Activated CD4-positive, alpha-beta T cell treated with anti-CD3 and anti-CD28 coated beads, Interleukin-2, amount 10 ng/mL, durations not matched to agents 24 days and 14 days (primary cell): ENCODE measurements at regions of chr3 and their contacts with region 1.

Region 1: DNA sequence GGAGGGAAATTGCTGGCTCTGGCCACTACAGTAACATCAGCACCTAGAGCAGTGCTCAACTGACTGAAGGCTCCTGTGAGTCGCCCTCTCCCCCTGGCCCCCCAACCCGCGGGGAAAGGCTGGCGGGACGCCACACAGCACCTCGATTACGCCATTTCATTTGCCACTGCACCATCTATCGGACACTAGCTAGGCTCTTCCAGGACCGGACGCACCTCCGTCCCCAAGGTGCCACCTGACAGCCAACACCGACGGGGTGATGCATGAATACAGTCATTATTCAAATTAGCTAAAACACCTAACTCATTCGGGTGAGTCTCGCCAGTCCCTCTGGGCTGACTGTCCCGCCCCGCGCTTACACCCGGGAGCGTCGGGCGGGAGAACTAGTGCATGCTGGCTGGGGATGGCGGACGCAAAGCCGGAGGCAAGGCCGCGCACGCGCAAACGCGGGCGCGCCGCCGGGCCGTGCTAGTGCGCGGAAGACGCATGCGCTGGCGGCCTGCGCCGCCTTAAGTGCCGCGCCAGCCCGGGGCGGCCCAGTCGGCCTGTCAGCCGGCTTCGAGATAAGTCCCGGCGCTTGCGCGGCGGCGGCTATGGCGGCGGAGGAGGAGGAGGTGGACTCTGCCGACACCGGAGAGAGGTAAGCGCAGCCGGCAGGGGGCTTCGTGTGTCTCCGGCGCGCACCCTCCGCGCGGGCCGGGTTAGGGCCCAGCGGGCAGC is at the start of gene ABHD5:
- DNase-seq: peak; percentile 98
- H3K4me3 Mint-ChIP-seq: peak within 1 kb of the TSS; percentile 88
- H3K27ac Mint-ChIP-seq: peak within 1 kb of the TSS; percentile 91
- H3K4me1 Mint-ChIP-seq: peaks cover 28% of the 10 kb centered on the region
- H3K27me3 Mint-ChIP-seq: peaks cover 8% of the 10 kb centered on the region
- total RNA-seq, gene ABHD5: 19.0 and 19.5 TPM in 2 replicates

Region 2: DNA sequence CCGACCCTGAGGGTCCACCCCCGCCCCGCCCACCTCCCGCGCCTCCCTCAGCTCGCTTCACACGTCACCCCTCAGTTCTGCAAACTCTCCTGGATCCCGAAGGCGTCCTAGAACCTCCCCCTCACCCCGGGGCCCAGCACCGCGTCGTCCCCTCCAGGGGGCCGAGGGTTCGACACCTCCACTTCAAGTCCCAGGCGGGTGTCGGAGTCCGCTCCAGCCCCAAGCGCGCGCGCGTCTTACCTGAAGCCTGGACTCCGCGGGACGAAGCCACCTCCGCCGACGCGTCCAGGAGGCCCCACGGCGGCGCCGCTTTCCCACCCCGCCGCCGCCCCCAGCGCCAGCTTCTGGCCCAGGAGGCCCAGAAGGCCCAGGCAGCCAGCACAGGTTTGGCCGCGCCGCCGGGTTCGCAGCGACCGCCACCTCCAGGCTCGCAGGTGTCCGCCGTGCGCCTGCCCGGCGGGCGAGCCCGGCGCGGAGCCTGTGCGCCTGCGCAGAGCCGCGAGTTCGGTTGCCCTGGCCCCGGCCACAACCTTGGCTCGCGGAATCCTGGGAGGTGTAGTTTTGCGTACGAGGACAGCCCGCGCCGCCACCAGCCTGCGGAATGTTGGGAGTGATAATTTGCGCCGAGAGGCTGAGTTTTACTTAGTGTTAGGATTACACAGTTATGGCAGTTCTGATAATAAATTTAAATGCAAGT is 584.8 kb before region 1 on chr3 and contains the start of gene POMGNT2:
- intact Hi-C with region 1: loop called (anchors 5 kb)
- DNase-seq: peak; percentile 96
- H3K4me3 Mint-ChIP-seq: peak within 1 kb of the TSS; percentile 80
- H3K27ac Mint-ChIP-seq: no peak within 1 kb of the TSS
- H3K4me1 Mint-ChIP-seq: peaks cover 12% of the 10 kb centered on the region
- H3K27me3 Mint-ChIP-seq: no peaks in the 10 kb centered on the region
- total RNA-seq, gene POMGNT2: 8.3 and 8.8 TPM in 2 replicates

Region 3: DNA sequence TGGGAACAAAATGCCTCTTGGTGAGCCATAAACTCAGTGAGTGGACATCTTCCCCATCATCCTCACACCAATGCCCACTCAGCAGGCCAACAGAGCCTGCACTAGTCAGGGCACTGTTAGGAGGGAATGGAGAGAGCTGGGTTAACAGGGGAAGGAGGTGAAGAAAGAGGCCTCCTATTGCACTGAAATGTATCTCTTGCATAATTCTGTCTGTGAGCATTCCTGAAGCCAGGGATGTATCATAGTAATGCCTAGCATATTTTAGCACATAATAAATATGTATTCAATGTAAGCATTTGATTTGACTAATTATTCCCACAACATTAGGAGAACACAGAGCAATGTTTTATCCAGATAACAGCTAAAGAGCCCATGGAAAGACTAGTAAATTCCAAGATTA is 149.9 kb before region 1 on chr3:
- intact Hi-C with region 1: loop called (anchors 1 kb)
- DNase-seq: no peak
- H3K4me3 Mint-ChIP-seq: no peak overlapping the region
- H3K27ac Mint-ChIP-seq: no peak overlapping the region
- H3K4me1 Mint-ChIP-seq: no peaks in the 10 kb centered on the region
- H3K27me3 Mint-ChIP-seq: peaks cover 1% of the 10 kb centered on the region

Region 4: GRCh38 chr3:43621656-43622432 is 68.7 kb before region 1 on chr3 and contains the start of gene ANO10:
- intact Hi-C with region 1: loop called (anchors 1 kb)
- DNase-seq: peak; percentile 98
- H3K4me3 Mint-ChIP-seq: peak within 1 kb of the TSS; percentile 95
- H3K27ac Mint-ChIP-seq: peak within 1 kb of the TSS; percentile 89
- H3K4me1 Mint-ChIP-seq: peaks cover 21% of the 10 kb centered on the region
- H3K27me3 Mint-ChIP-seq: peaks cover 16% of the 10 kb centered on the region
- total RNA-seq, gene ANO10: 3.5 and 6.0 TPM in 2 replicates

Region 5: GRCh38 chr3:43759297-43759782 is 68.8 kb after region 1 on chr3:
- intact Hi-C with region 1: loop called (anchors 5 kb)
- DNase-seq: peak; percentile 58
- H3K4me3 Mint-ChIP-seq: no peak overlapping the region
- H3K27ac Mint-ChIP-seq: no peak overlapping the region
- H3K4me1 Mint-ChIP-seq: peaks cover 20% of the 10 kb centered on the region
- H3K27me3 Mint-ChIP-seq: peaks cover 2% of the 10 kb centered on the region